Activated CD8-positive, alpha-beta T cell treated with anti-CD3 and anti-CD28 coated beads, Interleukin-2, amount 10 ng/mL, durations not matched to agents 7 days and 5 days (primary cell): ENCODE measurements at regions of chr2 and their contacts with region 1.

Region 1: GRCh38 chr2:143223556-143223955 is 94.3 kb downstream of the ARHGAP15 start:
- DNase-seq: no peak
- ATAC-seq: no peak
- H3K4me3 Mint-ChIP-seq: no peak overlapping the region
- H3K27ac Mint-ChIP-seq: peak overlapping the region; percentile 17
- H3K4me1 Mint-ChIP-seq: peaks cover 46% of the 10 kb centered on the region
- H3K27me3 Mint-ChIP-seq: no peaks in the 10 kb centered on the region

Region 2: DNA sequence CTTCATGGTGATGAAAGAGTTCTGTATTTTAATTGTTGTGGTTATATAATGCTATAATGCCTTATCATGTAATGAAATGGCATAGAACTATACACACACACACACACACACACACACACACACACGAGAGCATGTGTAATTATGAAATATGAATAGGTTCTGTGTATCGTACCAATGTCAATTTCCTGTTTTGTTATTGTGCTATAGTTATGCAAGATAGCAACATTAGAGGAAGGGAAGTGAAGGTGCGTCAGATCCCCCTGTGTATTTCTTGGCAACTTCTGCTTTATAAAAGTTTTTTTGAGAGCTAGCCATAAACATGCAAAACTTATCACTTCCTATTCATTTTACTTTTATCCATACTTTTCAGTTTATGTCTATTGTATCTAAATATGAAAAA is 155.0 kb before region 1 on chr2:
- CTCF ChIA-PET with region 1: no interaction called
- POLR2A ChIA-PET with region 1: no interaction called
- DNase-seq: no peak
- ATAC-seq: no peak
- H3K4me3 Mint-ChIP-seq: no peak overlapping the region
- H3K27ac Mint-ChIP-seq: no peak overlapping the region
- H3K4me1 Mint-ChIP-seq: no peaks in the 10 kb centered on the region
- H3K27me3 Mint-ChIP-seq: peaks cover 13% of the 10 kb centered on the region

Region 3: DNA sequence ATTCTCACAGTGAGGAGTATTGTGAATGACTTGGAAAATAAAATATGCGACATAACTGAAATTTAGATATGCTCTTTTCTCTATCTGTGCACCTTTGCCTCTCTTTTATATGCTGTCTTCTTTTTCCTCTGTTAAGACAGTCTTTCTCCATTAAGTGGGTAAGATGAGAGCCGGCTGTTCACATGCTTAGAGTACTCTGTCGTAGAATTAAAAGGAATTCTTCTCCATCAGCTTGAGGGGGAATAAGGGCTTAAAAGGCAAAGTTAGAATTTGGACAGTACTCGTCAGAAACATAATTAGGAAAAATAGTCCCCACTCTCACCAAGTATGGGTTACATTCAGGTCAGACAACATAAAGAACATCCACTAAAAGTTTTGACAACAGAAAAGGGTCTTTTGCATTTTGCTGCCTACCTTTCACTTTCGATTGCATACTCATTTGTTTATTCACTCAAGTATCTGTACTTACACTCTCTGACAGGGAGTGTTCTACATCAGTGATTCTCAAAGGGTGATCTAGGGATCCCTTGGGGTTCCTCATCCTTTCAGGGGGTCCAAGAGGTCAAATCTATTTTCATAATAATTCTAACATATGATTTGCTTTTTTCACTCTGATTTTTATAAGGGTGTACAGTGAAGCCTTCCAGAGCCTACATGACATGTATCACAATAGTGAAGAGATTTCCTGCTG is 46.3 kb before region 1 on chr2:
- CTCF ChIA-PET with region 1: no interaction called
- POLR2A ChIA-PET with region 1: no interaction called
- DNase-seq: no peak
- ATAC-seq: peak; percentile 65
- H3K4me3 Mint-ChIP-seq: peak overlapping the region; percentile 81
- H3K27ac Mint-ChIP-seq: peak overlapping the region; percentile 90
- H3K4me1 Mint-ChIP-seq: peaks cover 59% of the 10 kb centered on the region
- H3K27me3 Mint-ChIP-seq: no peaks in the 10 kb centered on the region

Region 4: DNA sequence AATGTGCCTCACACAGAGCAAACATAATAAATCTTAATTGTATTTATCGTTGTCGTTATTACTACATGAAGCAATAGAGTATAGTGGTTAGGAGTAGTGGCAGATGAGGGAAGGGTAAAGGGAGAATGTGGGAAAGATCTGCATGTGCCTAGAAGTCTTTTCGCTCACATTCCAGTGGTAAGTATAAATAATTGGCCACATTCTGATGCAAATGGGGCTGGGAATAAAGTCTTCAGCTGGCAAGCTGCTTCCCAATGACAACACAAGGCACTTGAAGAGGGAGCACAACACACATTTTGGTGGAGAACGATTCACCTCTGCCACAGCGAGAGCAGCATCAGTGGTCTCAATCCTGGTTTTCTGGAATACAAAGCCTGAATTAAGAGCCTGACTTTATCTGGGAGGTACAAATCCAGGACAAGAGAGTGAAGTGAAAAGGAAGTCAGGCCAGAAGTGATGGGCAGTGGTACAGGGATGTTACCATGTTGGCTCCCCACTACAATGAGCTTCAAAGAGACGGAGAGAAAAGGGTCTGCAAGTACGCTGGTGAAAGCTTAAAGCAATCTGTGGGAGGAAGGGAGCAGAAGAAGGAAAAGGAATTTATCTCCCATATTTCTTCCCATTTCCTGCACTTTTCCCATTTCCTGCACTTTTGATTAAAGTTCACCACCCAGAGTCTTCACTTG is 18.0 kb after region 1 on chr2:
- CTCF ChIA-PET with region 1: interaction called, 14 read pairs
- POLR2A ChIA-PET with region 1: interaction called, 3 read pairs
- DNase-seq: no peak
- ATAC-seq: no peak
- H3K4me3 Mint-ChIP-seq: no peak overlapping the region
- H3K27ac Mint-ChIP-seq: peak overlapping the region; percentile 50
- H3K4me1 Mint-ChIP-seq: peaks cover 11% of the 10 kb centered on the region
- H3K27me3 Mint-ChIP-seq: no peaks in the 10 kb centered on the region